ENCODE measurements at regions of chr4 and their contacts with region 1.

Region 1: DNA sequence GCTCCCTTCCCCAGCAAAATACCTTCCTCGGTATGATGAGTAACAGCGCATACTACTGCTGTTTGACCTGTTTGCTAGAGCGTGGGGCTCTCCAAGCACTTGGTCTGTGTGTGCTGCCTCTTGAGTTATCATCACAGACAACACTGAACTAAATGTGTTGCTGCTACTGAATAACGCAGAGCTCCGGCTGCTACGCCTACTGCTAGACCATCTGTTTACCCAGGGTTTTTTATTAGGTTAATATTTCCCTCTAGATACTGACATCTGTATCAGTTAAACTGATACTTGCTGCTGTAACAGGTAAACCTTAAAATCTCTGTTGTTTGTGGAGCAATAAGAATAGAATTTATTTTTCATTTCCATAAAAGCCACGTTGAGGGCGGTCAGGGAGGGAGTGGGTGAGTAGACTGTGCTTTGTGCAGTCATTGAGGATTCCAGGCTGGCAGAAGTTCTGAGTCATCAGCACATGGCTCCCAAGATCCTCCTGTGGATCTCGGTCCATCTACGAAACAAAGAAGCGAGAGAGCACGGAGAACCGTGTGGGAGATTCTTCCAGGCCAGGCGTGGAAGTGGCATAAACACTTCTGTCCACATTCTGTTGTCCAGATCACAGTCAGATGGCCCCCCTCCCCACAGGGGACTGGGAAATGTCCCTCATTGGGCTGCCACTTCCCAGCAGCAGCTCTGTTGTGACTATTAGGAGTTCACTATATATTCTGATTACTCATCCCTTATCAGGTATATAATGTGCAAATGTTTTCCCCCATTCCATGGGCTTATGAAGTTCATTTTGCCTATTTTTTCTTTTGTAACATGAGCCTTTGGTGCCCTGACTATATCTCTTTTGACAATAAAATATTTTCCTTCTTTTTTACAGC is 14.1 kb downstream of the GRK4 start:
- DNase-seq: no peak
- H3K4me3 ChIP-seq: no peak overlapping the region
- H3K27me3 ChIP-seq: no peaks in the 10 kb centered on the region; the same call in 1 of the 2 replicates
- CTCF ChIP-seq: no peak

Region 2: GRCh38 chr4:2995546-2996265 is 18.3 kb after region 1 on chr4:
- CTCF ChIA-PET with region 1: interaction called, 11 read pairs
- POLR2A ChIA-PET with region 1: no interaction called
- DNase-seq: no peak
- H3K4me3 ChIP-seq: no peak overlapping the region
- H3K27me3 ChIP-seq: 0 out of 2 replicates have a peak, but pooled peaks cover 2% of the 10 kb centered on the region
- CTCF ChIP-seq: no peak

Region 3: GRCh38 chr4:3009422-3009821 is 32.0 kb after region 1 on chr4:
- CTCF ChIA-PET with region 1: interaction called, 10 read pairs
- POLR2A ChIA-PET with region 1: no interaction called
- DNase-seq: no peak
- H3K4me3 ChIP-seq: no peak overlapping the region
- H3K27me3 ChIP-seq: peaks cover 3% of the 10 kb centered on the region
- CTCF ChIP-seq: no peak

Region 4: DNA sequence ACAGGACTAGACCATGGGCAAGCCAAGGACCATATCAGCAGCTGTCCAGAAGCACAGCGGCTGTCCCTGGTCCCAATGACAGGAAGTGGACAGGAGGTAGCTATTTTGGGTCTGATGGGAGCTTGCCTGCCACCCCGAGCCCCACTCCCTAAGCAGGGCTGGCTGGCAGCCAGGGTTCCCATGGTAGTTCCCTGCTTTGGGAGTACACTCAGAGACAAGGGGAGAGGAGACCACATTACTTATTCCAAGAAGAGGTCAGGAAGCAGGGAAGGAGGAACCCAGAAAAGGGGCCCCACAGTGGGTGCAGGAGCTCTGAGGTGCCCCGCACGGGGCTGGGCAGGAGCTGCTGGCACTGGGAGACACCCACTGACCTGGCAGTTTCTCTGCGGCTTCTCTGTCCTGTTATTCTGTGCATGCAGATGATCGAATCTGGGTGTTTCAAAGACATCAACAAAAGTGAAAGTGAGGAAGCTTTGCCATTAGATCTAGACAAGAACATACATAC is 60.6 kb after region 1 on chr4:
- CTCF ChIA-PET with region 1: interaction called, 52 read pairs
- POLR2A ChIA-PET with region 1: no interaction called
- DNase-seq: no peak
- H3K4me3 ChIP-seq: no peak overlapping the region
- H3K27me3 ChIP-seq: peaks cover 8% of the 10 kb centered on the region
- CTCF ChIP-seq: no peak

Region 5: DNA sequence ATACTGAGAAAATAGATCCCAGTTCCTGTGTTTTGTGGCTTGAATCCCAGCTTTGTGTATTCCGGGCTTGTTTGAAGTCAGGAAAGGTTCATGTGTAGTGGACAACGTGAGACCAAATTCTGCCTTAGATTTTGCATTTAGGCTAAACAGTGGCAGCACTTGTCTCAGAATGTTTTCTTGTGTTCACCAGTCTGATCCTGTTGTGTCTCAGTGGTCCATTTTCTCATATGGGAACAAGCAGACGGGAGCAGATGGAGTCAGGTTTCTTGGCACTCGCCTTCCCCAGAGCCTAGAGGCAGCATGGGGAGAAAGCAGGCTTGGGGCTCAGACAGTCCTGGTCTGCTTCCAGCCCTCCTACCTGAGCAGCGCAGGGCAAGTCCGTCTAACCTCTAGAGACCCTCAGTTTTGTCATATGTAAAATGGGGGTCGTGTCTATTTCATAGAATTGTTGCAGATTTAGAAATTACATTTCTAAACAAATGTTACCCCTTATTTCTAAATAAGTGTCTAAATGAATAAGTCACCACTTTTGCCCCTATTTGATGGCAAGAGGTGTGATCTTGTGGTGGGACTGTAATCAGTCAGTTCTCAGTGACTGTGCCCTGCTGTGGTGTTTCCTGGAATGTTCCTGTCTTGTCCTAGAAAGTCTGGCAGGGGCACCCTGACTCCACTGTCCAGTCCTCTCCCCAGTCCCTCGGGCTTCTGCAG is 243.2 kb after region 1 on chr4:
- CTCF ChIA-PET with region 1: no interaction called
- POLR2A ChIA-PET with region 1: no interaction called
- DNase-seq: no peak
- H3K4me3 ChIP-seq: no peak overlapping the region
- H3K27me3 ChIP-seq: no peaks in the 10 kb centered on the region
- CTCF ChIP-seq: no peak

Measured in BJ (cell line).